Right cardiac atrium (tissue), 5 donors: ENCODE measurements at regions of chr10 and their contacts with region 1.

Region 1: GRCh38 chr10:60944159-60944909 is at the start of gene RHOBTB1:
- DNase-seq: peak; percentile 83 to 93 (median 92)
- ATAC-seq: peak; percentile 95
- H3K4me3 ChIP-seq: peak within 1 kb of the TSS; percentile 91
- H3K27ac ChIP-seq: peak within 1 kb of the TSS; percentile 89
- H3K4me1 ChIP-seq: no peaks in the 10 kb centered on the region
- H3K27me3 ChIP-seq: no peaks in the 10 kb centered on the region
- total RNA-seq, gene RHOBTB1: 9.3 to 13.8 (median 11.0) TPM

Region 2: GRCh38 chr10:60784641-60785040 is 159.7 kb before region 1 on chr10:
- intact Hi-C with region 1: no loop called
- DNase-seq: no peak
- ATAC-seq: no peak
- H3K4me3 ChIP-seq: no peak overlapping the region
- H3K27ac ChIP-seq: no peak overlapping the region
- H3K4me1 ChIP-seq: no peaks in the 10 kb centered on the region
- H3K27me3 ChIP-seq: no peaks in the 10 kb centered on the region

Region 3: DNA sequence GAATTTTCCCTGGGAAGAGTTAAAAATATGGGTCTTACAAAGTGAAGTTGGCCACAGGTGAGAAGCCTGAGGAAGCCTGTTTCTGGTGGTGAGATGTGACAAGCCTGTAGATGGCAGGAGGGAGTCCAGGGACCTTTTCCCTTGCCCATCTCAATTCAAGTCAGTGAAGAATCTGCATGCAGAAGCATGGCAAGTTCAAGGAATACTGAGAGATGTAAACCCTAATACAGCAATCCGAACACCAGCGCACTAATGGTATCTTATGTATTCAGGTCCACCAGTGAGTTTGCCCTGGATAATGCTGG is 74.0 kb before region 1 on chr10:
- intact Hi-C with region 1: no loop called
- DNase-seq: no peak
- ATAC-seq: no peak
- H3K4me3 ChIP-seq: no peak overlapping the region
- H3K27ac ChIP-seq: no peak overlapping the region
- H3K4me1 ChIP-seq: no peaks in the 10 kb centered on the region
- H3K27me3 ChIP-seq: no peaks in the 10 kb centered on the region

Region 4: GRCh38 chr10:60896033-60896432 is 48.3 kb before region 1 on chr10:
- intact Hi-C with region 1: loop called in 2 of 4 experiments (anchors 5 kb)
- DNase-seq: no peak
- ATAC-seq: peak in 1 of 2 donors; percentile 53
- H3K4me3 ChIP-seq: no peak overlapping the region
- H3K27ac ChIP-seq: no peak overlapping the region
- H3K4me1 ChIP-seq: peaks cover 5% of the 10 kb centered on the region
- H3K27me3 ChIP-seq: no peaks in the 10 kb centered on the region

Region 5: GRCh38 chr10:60901561-60902235 is 42.6 kb before region 1 on chr10:
- intact Hi-C with region 1: loop called in 2 of 4 experiments (anchors 5 kb)
- DNase-seq: peak; percentile 64 to 90 (median 87)
- ATAC-seq: peak; percentile 91 to 93
- H3K4me3 ChIP-seq: no peak overlapping the region
- H3K27ac ChIP-seq: no peak overlapping the region
- H3K4me1 ChIP-seq: peaks cover 4% of the 10 kb centered on the region
- H3K27me3 ChIP-seq: no peaks in the 10 kb centered on the region